PC-9 (cell line): ENCODE measurements at regions of chr2 and their contacts with region 1.

Region 1: DNA sequence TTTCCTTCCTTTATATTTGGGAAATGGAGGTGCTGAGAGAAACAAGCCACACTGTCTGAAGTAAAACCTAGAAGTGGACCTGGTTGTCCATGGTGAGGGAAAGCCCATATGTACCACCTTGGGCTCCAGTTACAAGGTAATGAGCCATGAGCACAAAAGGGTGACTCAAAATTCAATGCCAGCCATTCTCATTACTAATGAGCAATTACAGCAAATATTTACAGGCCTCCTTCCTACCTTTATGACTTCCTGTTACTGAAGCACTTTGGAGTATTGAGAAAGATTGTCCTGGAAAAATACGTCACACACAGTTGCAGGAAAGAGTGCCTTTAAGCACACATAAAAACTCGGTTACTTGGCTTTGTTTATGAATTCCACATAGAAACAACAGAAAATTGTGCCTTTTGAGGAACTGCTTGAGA is 9.1 kb downstream of the EPAS1 start:
- DNase-seq: peak; percentile 40 to 100
- H3K4me3 ChIP-seq: peak overlapping the region; percentile 43; the same call in 1 of the 2 replicates
- H3K27ac ChIP-seq: peak overlapping the region; percentile 87
- H3K4me1 ChIP-seq: peaks cover 98% of the 10 kb centered on the region
- H3K27me3 ChIP-seq: no peaks in the 10 kb centered on the region
- CTCF ChIP-seq: no peak

Region 2: DNA sequence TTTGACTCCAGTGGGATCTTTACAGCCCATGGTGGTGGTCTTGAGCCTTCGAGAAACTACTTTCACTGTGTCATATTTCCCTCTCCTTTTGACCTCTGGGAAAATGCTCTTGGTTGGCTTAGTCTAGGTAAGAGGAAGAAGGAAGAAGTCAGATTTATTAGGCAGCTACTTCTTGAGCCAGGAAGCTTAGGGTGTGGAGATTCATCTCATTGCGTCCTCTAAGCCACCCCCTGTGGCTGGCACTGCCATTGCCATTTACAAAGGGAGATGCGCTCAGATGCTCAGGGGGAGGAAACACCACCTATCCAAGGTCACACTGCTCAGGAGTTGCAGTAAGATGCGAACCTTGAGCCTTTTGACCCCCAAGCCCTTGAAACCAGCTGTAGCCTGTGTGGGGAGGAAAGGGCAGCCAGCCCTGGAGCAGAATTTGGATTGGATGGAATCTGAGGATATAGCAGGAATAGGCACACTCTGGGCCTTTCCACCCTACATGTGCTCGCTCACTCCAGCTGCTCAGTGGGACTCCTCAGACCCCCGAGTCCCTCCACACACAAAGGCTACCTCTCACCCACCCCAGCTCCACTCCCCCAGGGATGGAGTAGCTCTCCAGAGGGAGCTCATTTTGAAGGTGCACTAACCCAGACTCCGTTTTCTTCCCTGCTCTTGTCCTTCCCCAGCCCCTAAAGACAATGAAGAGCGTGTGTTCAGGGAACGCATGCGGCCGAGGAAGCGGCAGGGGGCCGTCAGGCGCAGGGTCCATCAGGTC is 330.4 kb before region 1 on chr2:
- CTCF ChIA-PET with region 1: interaction called, 11 read pairs
- POLR2A ChIA-PET with region 1: no interaction called
- intact Hi-C with region 1: no loop called
- DNase-seq: no peak
- H3K4me3 ChIP-seq: no peak overlapping the region
- H3K27ac ChIP-seq: no peak overlapping the region
- H3K4me1 ChIP-seq: no peaks in the 10 kb centered on the region
- H3K27me3 ChIP-seq: no peaks in the 10 kb centered on the region
- CTCF ChIP-seq: no peak

Region 3: DNA sequence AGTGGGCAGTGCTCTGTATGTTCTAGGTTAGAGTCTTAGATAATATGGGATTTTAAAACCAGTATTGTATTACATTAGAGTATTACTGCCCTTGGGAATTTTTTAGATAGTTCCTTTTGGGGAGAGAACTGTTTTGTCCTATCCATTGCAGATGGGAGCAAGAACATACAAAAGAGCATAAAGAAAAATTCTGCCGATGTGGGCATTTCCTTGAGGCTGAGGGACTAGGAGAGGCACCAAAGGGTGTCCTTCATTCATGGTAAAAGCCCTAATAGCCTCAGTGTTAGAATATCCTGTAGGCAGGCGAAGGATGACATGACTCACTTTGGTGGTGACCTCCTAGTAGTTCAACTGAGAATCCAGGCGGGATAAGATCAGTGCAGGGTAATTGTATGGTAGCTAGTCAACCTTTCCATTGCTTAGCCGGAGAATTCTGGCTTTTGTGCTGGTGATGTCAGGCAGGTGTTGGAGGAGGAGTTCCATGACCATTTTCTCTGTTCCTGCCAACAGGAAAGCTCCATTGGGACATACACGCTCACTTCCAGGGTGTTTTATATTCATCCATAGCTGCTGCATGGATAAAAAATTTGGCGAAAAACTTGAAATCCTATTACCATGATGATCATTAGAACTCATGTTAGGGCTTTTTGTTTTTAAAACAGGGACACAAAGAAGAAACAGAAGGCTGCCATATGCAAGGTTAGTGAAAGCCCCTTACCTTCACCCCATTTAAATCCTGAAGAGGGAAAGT is 19.0 kb after region 1 on chr2:
- CTCF ChIA-PET with region 1: no interaction called
- POLR2A ChIA-PET with region 1: interaction called, 3 read pairs
- intact Hi-C with region 1: loop called (anchors 1 kb)
- DNase-seq: peak; percentile 63 to 71
- H3K4me3 ChIP-seq: no peak overlapping the region
- H3K27ac ChIP-seq: peak overlapping the region; percentile 48; the same call in 1 of the 2 replicates
- H3K4me1 ChIP-seq: peaks cover 63% of the 10 kb centered on the region
- H3K27me3 ChIP-seq: no peaks in the 10 kb centered on the region
- CTCF ChIP-seq: no peak